GM12878 (cell line): ENCODE measurements at regions of chr17 and their contacts with region 1.

Region 1: GRCh38 chr17:45307290-45308015 is 9.4 kb downstream of the MAP3K14 start:
- DNase-seq: peak; percentile 90
- ATAC-seq: peak; percentile 64
- H3K4me3 ChIP-seq: peak overlapping the region; percentile 14; the same call in 1 of the 2 replicates
- H3K27ac ChIP-seq: peak overlapping the region; percentile 94
- H3K4me1 ChIP-seq: peaks cover 82% of the 10 kb centered on the region
- H3K27me3 ChIP-seq: no peaks in the 10 kb centered on the region
- CTCF ChIP-seq: 0 out of 6 replicates have a peak, but pooled peaks of 1 of the 3 experiments have one; percentile 5
- EP300 ChIP-seq: peak; percentile 75 to 78; a peak in 3 of 4 replicates
- POLR2A ChIP-seq: no peak
- RAD21 ChIP-seq: no peak

Region 2: DNA sequence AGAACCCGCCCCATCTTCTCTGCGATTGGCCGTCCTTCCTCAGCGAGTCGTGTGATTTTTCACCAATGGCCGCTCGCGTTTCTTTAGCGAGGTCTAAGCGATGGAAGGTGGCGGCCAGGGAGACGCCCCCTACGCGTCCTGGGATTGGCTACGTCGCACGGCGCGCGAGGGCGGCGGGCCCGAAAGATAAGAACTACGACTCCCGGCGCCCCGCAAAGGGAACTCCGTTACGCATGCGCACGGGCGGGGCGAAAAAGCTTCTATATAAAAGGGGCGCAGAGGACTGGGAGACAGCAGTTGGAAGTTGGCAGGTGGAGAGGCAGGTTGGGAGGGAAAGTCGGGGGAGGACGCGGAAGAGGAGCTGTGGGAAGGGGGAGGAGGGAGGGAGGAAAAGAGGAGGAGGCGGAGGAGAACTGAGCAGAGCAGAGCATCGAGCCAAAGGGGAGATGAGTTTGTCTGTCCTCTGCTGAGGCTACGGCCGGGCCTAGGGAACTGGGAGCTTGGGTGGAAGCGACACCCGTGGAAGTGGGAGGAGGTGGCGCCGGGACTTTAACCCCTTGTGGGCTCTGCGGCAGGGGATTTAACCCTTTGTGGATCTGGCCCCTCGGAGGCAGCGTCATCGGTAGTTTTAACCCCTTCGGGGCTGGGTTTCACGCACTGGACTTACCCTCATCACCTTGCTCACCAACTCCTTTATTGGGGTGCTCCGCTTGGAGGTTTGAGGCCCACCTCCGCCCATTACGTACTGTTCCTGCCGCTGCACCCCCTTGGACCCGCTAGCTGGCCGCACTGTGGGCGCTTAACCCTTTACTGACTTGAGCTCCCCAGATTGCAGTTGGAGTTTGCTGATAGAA is 159.0 kb before region 1 on chr17 and contains the start of gene HEXIM1:
- CTCF ChIA-PET with region 1: interaction called, 5 read pairs
- POLR2A ChIA-PET with region 1: interaction called, 3 read pairs
- RAD21 ChIA-PET with region 1: no interaction called
- SMC1A ChIA-PET with region 1: interaction called, 4 read pairs
- in situ Hi-C with region 1: no loop called
- intact Hi-C with region 1: loop called (anchors 5 kb)
- DNase-seq: peak; percentile 95
- ATAC-seq: peak; percentile 83
- H3K4me3 ChIP-seq: peak within 1 kb of the TSS; percentile 96
- H3K27ac ChIP-seq: peak within 1 kb of the TSS; percentile 100
- H3K4me1 ChIP-seq: peaks cover 23% of the 10 kb centered on the region
- H3K27me3 ChIP-seq: no peaks in the 10 kb centered on the region
- CTCF ChIP-seq: no peak
- EP300 ChIP-seq: peak; percentile 13 to 14; a peak in 1 of 4 replicates
- POLR2A ChIP-seq: peak; percentile 100
- RAD21 ChIP-seq: no peak
- polyA plus RNA-seq, gene HEXIM1: 1.9 to 2.1 TPM

Region 3: DNA sequence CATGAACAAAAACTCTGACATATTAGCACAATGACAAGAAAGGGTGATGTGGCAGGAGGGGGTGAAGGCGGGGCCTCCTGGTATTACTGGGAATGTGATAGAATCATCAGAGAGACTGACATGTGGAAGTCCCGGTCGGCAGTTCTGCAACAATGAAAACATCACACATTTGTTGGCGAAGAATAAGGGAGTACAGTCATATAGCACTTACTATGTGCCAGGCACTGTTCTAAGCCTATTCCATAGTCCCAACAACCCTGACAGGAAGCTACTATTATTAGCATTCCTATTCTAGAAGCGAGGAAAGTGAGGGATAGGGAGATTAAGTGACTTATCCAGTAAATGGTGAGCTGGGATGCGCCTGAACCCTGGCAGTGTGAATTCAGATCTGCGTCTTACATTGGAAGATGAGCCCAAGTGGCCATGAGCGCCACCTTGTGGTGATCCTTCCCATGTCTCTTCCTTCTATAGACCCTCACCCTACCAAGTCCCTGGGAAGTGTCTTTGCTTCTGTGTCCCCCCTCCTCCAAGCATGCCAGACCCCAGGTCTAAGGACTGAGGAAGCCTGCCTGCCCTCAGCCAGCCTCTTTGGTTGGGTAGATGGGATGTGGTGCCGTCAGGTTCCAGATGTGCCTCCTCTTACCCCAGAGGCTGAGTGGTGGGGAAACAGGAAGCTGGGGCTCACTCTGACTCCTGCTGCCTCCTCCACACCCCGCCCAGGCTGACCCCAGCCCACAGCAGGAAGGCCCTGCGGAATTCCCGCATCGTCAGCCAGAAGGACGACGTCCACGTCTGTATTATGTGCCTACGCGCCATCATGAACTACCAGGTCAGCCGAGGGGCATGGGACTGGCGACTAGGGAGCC is 71.8 kb before region 1 on chr17:
- CTCF ChIA-PET with region 1: interaction called, 17 read pairs
- POLR2A ChIA-PET with region 1: no interaction called
- RAD21 ChIA-PET with region 1: no interaction called
- SMC1A ChIA-PET with region 1: interaction called, 9 read pairs
- in situ Hi-C with region 1: no loop called
- intact Hi-C with region 1: no loop called
- DNase-seq: no peak
- ATAC-seq: peak; percentile 85
- H3K4me3 ChIP-seq: no peak overlapping the region
- H3K27ac ChIP-seq: no peak overlapping the region
- H3K4me1 ChIP-seq: peaks cover 2% of the 10 kb centered on the region
- H3K27me3 ChIP-seq: no peaks in the 10 kb centered on the region
- CTCF ChIP-seq: peak; percentile 78 to 84 (median 82)
- EP300 ChIP-seq: no peak
- POLR2A ChIP-seq: no peak
- RAD21 ChIP-seq: peak; percentile 69

Region 4: DNA sequence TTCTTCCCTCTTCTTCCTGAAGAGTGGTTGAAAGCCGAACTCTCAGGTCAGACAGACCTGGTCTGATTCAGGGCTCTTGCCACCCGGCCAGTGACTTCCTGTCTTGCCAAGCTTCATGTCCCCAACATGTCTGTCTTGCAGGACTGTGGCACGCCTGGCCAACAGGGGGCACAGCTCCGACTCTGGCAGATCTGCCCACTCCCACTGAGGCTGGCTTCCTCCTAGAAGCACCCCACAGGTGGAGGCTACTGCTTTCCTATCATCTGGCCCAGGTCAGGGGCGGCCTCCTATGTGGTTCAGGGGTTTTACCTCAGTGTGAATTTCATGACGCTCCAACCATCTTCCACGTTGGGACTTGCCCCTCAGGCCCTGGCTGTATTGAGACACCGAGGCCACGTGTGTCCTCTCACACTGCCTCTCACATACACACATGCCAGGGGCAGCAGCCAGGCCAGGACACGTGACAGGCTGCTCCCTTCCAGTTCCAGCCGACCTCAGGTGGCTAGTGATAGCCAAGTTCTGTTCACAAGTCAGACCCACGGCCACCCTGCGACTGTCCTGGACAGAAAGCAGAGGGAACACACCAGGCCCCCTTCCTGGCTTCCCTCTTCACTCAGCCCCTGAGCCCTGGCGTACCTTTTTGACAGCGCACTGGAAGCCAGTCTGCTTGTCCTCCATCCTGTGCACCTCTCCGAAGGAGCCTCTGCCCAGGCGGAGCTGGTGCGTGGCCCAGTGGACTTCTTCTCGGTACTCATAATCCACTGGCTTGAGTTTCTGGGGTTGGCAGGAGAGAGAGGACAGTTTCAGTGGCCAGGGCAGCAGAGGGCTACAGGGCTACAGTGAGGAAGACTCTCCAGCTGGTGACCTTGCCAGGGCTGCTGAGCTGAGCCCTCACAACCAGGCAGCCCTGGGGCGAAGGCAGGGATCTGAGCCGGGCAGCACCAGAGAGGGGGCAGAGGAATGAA is 23.0 kb before region 1 on chr17:
- CTCF ChIA-PET with region 1: interaction called, 194 read pairs
- POLR2A ChIA-PET with region 1: interaction called, 3 read pairs
- RAD21 ChIA-PET with region 1: interaction called, 8 read pairs
- SMC1A ChIA-PET with region 1: interaction called, 4 read pairs
- in situ Hi-C with region 1: no loop called
- intact Hi-C with region 1: no loop called
- DNase-seq: no peak
- ATAC-seq: peak; percentile 86
- H3K4me3 ChIP-seq: no peak overlapping the region
- H3K27ac ChIP-seq: peak overlapping the region; percentile 44
- H3K4me1 ChIP-seq: no peaks in the 10 kb centered on the region
- H3K27me3 ChIP-seq: no peaks in the 10 kb centered on the region
- CTCF ChIP-seq: peak; percentile 26 to 45 (median 43); a peak in 3 of 6 replicates
- EP300 ChIP-seq: no peak
- POLR2A ChIP-seq: peak; percentile 40
- RAD21 ChIP-seq: peak; percentile 26; the same call in 1 of the 2 replicates

Region 5: DNA sequence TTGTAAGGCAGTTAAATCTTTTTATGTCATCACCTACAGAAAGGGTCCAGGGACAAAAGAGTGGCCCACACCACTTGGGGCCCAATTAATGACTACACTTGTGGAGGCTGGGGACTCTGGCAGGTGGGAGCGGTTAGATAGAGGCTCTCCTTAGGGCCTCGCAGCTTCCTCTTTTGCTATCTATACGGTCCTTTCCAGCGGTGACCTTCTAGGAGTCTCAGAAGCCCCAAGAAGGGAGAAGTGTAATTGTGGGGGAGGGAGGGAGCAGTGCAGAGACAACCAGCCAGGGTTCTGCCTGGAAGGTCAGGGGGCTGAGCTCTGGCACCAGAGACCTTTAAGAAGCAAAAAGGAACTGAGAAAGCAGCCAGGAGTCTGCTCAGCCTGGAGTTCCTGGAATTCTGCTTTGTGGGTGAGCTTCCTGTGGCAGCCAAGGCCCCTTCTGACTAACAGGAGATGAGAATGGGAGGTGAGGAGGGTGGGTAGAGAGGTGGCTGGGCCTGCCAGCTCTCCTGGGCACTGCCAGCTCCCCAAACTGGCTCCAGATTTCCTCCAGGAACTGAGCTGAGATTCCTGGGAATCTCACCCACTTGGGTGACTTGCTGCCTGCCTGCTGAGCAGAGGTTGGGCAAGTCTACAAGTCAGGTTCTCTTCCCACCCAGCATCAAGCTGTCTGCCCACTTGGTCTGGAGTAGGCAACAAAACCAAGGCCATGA is 25.7 kb after region 1 on chr17:
- CTCF ChIA-PET with region 1: interaction called, 10 read pairs
- POLR2A ChIA-PET with region 1: interaction called, 7 read pairs
- RAD21 ChIA-PET with region 1: interaction called, 22 read pairs
- SMC1A ChIA-PET with region 1: interaction called, 17 read pairs
- in situ Hi-C with region 1: no loop called
- intact Hi-C with region 1: no loop called
- DNase-seq: no peak
- ATAC-seq: peak; percentile 78
- H3K4me3 ChIP-seq: peak overlapping the region; percentile 3; the same call in 1 of the 2 replicates
- H3K27ac ChIP-seq: peak overlapping the region; percentile 33
- H3K4me1 ChIP-seq: peaks cover 43% of the 10 kb centered on the region
- H3K27me3 ChIP-seq: no peaks in the 10 kb centered on the region
- CTCF ChIP-seq: no peak
- EP300 ChIP-seq: peak in 1 of 2 experiments; percentile 42; a peak in 1 of 4 replicates
- POLR2A ChIP-seq: no peak
- RAD21 ChIP-seq: no peak

Region 6: GRCh38 chr17:45385331-45385997 is 78.0 kb after region 1 on chr17:
- CTCF ChIA-PET with region 1: interaction called, 38 read pairs
- POLR2A ChIA-PET with region 1: interaction called, 5 read pairs
- RAD21 ChIA-PET with region 1: interaction called, 107 read pairs
- SMC1A ChIA-PET with region 1: interaction called, 21 read pairs
- in situ Hi-C with region 1: no loop called
- intact Hi-C with region 1: loop called (anchors 5 kb)
- DNase-seq: peak; percentile 56
- ATAC-seq: peak; percentile 98
- H3K4me3 ChIP-seq: no peak overlapping the region
- H3K27ac ChIP-seq: 0 out of 2 replicates have a peak overlapping the region, but pooled peaks have one; percentile 50
- H3K4me1 ChIP-seq: peaks cover 15% of the 10 kb centered on the region
- H3K27me3 ChIP-seq: no peaks in the 10 kb centered on the region
- CTCF ChIP-seq: peak; percentile 99; a peak in 5 of 6 replicates
- EP300 ChIP-seq: no peak
- POLR2A ChIP-seq: no peak
- RAD21 ChIP-seq: peak; percentile 100